ENCODE measurements at regions of chr17 and their contacts with region 1.

Region 1: DNA sequence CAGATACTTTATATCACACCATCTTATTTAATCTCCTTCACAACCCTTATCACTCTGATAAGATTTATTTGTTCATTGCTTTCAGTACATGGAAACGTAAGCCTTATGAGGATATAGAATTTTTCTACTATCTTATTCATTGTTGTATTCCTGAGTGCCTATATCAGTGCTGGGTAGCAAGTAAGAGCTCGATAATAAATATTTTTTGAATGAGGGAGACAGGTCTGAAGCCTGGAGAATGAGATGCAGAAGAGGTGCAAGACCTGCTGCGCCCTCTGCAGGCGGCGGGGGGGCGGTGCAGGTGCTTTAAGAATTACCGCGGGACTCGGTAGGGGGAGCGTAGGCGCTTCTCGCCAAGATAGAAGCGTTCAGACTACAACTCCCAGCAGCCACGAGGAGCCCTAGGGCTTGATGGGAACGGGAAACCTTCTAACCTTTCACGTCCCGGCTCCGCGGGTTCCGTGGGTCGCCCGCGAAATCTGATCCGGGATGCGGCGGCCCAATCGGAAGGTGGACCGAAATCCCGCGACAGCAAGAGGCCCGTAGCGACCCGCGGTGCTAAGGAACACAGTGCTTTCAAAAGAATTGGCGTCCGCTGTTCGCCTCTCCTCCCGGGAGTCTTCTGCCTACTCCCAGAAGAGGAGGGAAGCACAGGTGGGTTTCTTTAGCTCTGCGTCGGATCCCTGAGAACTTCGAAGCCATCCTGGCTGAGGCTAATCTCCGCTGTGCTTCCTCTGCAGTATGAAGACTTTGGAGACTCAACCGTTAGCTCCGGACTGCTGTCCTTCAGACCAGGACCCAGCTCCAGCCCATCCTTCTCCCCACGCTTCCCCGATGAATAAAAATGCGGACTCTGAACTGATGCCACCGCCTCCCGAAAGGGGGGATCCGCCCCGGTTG is at the start of gene WRAP53:
- DNase-seq: peak; percentile 97
- ATAC-seq: peak; percentile 81
- H3K4me3 Mint-ChIP-seq: peak within 1 kb of the TSS; percentile 83
- H3K27ac Mint-ChIP-seq: peak within 1 kb of the TSS; percentile 97
- H3K4me1 Mint-ChIP-seq: peaks cover 35% of the 10 kb centered on the region
- H3K27me3 Mint-ChIP-seq: no peaks in the 10 kb centered on the region
- total RNA-seq, gene WRAP53: 23.5 to 27.1 TPM

Region 2: GRCh38 chr17:7035591-7036368 is 652.4 kb before region 1 on chr17 and contains the start of gene SLC16A13:
- CTCF ChIA-PET with region 1: interaction called, 3 read pairs
- POLR2A ChIA-PET with region 1: interaction called, 5 read pairs
- intact Hi-C with region 1: loop called in 1 of 2 experiments (anchors 5 kb)
- DNase-seq: peak; percentile 99
- ATAC-seq: peak; percentile 95
- H3K4me3 Mint-ChIP-seq: peak within 1 kb of the TSS; percentile 86
- H3K27ac Mint-ChIP-seq: peak within 1 kb of the TSS; percentile 96
- H3K4me1 Mint-ChIP-seq: peaks cover 45% of the 10 kb centered on the region
- H3K27me3 Mint-ChIP-seq: no peaks in the 10 kb centered on the region
- total RNA-seq, gene SLC16A13: 8.3 to 9.6 TPM

Region 3: DNA sequence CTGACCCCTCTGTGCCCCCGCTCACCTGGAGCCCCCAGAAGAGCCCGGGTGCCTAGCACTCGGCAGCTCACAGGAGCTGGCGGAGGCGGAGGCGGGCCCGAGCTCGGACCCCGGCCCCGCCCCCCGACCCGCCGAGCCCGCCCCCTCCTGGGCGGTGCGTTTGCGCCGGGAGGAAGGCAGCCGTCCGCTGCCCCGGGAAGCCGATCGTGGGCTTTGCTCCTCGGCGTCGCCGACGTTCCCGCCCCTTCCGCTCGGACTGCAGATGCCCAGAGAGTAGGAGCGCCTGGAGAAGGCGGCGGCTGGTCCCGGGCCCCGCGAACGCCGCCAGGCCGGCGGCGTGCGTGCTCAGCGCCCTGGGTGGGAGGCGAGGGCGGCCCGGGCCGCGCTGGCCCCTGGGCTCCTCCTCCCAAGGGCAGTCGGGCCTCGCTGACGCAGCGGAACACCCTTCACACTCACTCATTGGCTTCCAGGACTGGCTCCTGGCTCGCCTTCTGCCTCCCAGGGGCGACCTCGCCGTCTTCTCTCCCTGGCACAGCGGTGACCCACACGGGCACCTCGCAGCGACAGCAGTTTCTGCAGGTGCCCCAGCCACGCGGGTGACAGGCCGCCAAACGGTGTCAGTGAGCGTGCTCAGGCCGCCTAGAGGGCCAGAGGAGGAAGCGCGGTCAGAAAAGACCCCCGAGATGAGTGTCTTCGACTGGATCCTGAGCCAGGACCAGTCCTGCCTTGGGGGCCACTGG is 293.5 kb before region 1 on chr17 and contains the start of gene PLSCR3:
- CTCF ChIA-PET with region 1: no interaction called
- POLR2A ChIA-PET with region 1: no interaction called
- intact Hi-C with region 1: loop called in 1 of 2 experiments (anchors 2 kb)
- DNase-seq: peak; percentile 90
- ATAC-seq: peak; percentile 86
- H3K4me3 Mint-ChIP-seq: peak within 1 kb of the TSS; percentile 88
- H3K27ac Mint-ChIP-seq: peak within 1 kb of the TSS; percentile 95
- H3K4me1 Mint-ChIP-seq: peaks cover 26% of the 10 kb centered on the region
- H3K27me3 Mint-ChIP-seq: no peaks in the 10 kb centered on the region
- total RNA-seq, gene PLSCR3: 69.3 to 78.9 TPM

Region 4: GRCh38 chr17:7523033-7523432 is 165.1 kb before region 1 on chr17:
- CTCF ChIA-PET with region 1: no interaction called
- POLR2A ChIA-PET with region 1: no interaction called
- intact Hi-C with region 1: loop called in 1 of 2 experiments (anchors 5 kb)
- DNase-seq: peak; percentile 67
- ATAC-seq: peak; percentile 81
- H3K4me3 Mint-ChIP-seq: no peak overlapping the region
- H3K27ac Mint-ChIP-seq: no peak overlapping the region
- H3K4me1 Mint-ChIP-seq: no peaks in the 10 kb centered on the region
- H3K27me3 Mint-ChIP-seq: no peaks in the 10 kb centered on the region

Region 5: GRCh38 chr17:7632492-7632894 is 55.7 kb before region 1 on chr17:
- CTCF ChIA-PET with region 1: interaction called, 10 read pairs
- POLR2A ChIA-PET with region 1: interaction called, 5 read pairs
- intact Hi-C with region 1: loop called (anchors 1 kb)
- DNase-seq: peak; percentile 59
- ATAC-seq: peak; percentile 46
- H3K4me3 Mint-ChIP-seq: no peak overlapping the region
- H3K27ac Mint-ChIP-seq: no peak overlapping the region
- H3K4me1 Mint-ChIP-seq: peaks cover 2% of the 10 kb centered on the region
- H3K27me3 Mint-ChIP-seq: no peaks in the 10 kb centered on the region

Region 6: DNA sequence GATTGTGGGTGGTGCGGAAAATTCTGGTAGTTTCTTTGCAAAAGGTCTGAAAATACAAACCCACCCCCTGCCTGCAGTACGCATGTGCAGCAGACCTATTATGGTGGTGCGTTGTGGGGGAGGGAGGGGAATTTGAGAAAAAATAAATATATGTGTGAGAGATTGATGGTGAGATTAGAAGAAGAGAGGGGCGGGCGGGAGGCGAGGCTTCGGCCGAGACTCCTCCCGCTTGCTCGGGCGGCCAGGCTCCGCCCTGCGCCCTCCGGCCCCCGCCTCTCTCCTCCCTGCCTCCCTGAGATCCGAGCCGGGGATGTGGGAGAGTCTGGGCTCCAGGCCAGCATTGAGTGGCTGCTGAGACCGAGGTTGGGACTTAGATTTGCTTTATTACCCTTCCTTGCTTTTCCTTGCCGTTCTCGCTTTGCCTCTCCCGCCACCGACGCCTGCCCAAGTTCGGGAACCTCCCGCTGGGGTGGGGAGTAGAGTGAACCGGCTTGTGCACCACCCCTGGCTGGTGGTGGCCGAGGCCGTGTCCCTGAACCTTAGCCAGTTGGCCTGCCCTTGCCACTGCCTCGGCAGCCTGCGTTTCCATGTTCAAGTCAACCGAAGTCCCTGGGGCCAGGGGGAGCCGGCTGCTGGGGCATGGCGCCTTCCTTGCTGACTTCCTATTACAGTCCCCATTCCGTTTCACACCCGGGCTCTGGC is 199.5 kb after region 1 on chr17:
- CTCF ChIA-PET with region 1: no interaction called
- POLR2A ChIA-PET with region 1: no interaction called
- intact Hi-C with region 1: loop called in 1 of 2 experiments (anchors 1 kb)
- DNase-seq: peak; percentile 94
- ATAC-seq: peak; percentile 79
- H3K4me3 Mint-ChIP-seq: no peak overlapping the region
- H3K27ac Mint-ChIP-seq: no peak overlapping the region
- H3K4me1 Mint-ChIP-seq: peaks cover 4% of the 10 kb centered on the region
- H3K27me3 Mint-ChIP-seq: no peaks in the 10 kb centered on the region

Region 7: DNA sequence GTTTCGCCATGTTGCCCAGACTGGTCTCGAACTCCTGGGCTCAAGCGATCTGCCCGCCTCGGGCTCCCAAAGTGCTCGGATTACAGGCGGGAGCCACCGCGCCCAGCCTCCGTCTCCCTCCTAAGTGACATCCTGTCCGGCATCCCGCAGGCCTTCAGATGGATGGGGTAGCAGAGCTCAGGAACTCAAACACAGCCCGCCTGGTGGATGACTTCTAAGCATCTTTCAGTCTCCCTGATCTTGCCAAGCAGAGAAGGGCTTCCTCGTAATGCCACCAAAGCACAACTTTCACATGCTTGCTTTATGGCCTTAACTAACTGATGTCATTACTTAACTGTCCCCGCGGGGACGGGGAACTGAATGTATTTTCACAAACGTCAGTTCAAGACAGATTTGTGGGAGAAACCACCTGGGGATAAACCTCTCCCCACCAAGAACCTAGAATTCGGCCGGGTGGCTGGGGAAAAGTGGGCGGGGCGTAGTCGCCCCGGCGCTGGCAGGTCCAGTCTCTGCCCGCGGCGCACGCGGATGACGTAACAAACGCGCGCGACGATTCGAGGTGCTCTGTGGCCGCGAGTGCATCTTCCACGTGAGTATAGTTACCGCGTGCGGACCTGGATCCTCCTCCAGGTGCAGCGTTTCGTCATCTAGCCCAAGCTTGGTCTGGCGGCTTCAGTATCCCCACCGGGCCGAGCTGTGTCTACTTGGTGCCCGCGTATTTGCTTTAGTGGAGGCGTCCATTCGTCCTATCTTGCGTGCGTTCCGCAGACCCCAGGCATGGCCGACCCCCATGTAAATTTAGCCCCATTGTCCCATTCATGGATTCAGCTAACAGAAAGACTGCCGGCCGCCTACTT is 560.8 kb after region 1 on chr17 and contains the start of gene PFAS:
- CTCF ChIA-PET with region 1: no interaction called
- POLR2A ChIA-PET with region 1: no interaction called
- intact Hi-C with region 1: loop called in 1 of 2 experiments (anchors 2 kb)
- DNase-seq: peak; percentile 98
- ATAC-seq: peak; percentile 57
- H3K4me3 Mint-ChIP-seq: peak within 1 kb of the TSS; percentile 94
- H3K27ac Mint-ChIP-seq: peak within 1 kb of the TSS; percentile 98
- H3K4me1 Mint-ChIP-seq: peaks cover 36% of the 10 kb centered on the region
- H3K27me3 Mint-ChIP-seq: no peaks in the 10 kb centered on the region
- total RNA-seq, gene PFAS: 113 to 141 TPM